ENCODE measurements at regions of chr4 and their contacts with region 1.

Region 1: GRCh38 chr4:7719354-7720174 is 220.1 kb downstream of the AFAP1 start:
- DNase-seq: peak; percentile 73
- ATAC-seq: peak; percentile 58

Region 2: DNA sequence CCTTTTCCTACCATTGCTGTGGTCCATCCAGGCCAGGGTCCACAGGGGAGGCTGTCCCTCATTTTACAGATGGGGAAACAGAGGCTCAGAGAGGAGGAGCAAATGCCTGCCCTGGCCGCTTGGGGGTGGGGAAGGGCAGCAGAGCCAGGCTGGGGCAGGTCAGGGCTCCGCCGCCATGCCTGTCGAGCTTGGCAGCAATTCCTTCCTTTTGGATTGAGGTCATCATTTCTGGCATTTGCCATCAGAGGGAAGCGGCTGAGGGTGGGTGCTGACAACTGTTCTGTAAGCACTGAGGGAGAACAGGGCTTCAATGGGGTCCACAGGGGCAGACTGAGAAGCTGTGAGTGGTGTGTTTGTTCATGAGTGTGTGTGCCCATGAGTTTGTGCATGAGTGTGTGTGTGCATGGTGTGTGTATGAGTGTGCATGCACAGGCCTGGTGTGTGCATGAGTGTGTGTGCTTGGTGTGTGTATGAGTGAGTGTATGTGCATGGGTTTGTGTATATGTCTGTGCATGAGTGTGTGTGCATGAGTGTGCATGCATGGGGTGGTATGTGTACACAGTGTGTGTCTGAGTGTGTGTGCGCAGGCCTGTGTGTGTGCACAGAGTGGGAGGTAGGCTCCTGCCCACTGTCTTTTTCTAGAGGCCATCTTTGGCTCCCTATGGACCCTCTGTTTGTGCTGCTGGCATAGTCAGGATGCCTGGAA is 412.0 kb before region 1 on chr4:
- intact Hi-C with region 1: loop called (anchors 10 kb)
- DNase-seq: no peak
- ATAC-seq: peak; percentile 20

Region 3: DNA sequence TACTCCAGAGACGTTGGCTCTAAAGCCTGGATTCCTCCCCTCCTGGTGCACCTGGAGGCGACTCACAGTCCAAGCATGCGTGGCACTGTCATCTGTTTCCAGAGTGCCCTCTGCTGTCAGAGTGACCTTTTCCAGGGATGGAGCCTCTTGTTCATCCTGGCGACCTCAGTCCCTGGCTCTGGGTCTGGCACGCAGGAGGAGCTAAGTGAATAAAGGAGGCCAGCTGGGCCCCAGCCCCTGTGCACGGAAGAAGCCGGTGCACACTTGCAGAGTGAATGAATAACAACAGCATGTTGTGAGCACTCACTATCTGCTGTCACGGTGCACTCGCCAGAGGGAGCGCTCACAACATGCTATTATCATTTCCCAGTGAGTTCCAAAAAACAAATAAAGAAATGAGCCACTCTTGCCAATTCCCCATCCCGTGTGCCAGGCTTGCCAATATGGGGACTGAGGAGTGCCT is 257.0 kb before region 1 on chr4:
- intact Hi-C with region 1: loop called (anchors 2 kb)
- DNase-seq: no peak
- ATAC-seq: peak; percentile 57

Region 4: GRCh38 chr4:7607156-7607910 is 112.2 kb before region 1 on chr4:
- intact Hi-C with region 1: no loop called
- DNase-seq: peak; percentile 56
- ATAC-seq: no peak

Region 5: GRCh38 chr4:8297691-8298485 is 578.3 kb after region 1 on chr4:
- intact Hi-C with region 1: no loop called
- DNase-seq: no peak
- ATAC-seq: peak; percentile 18